ENCODE measurements at regions of chr17 and their contacts with region 1.

Region 1: GRCh38 chr17:8649157-8650118 is 18.9 kb upstream of the MYH10 start:
- DNase-seq: no peak
- ATAC-seq: peak; percentile 41; the same call in 2 of the 3 replicates
- H3K4me3 ChIP-seq: no peak overlapping the region
- H3K27ac ChIP-seq: no peak overlapping the region
- H3K4me1 ChIP-seq: peaks cover 61% of the 10 kb centered on the region
- H3K27me3 ChIP-seq: no peaks in the 10 kb centered on the region
- CTCF ChIP-seq: no peak
- EP300 ChIP-seq: no peak
- POLR2A ChIP-seq: no peak
- RAD21 ChIP-seq: no peak

Region 2: DNA sequence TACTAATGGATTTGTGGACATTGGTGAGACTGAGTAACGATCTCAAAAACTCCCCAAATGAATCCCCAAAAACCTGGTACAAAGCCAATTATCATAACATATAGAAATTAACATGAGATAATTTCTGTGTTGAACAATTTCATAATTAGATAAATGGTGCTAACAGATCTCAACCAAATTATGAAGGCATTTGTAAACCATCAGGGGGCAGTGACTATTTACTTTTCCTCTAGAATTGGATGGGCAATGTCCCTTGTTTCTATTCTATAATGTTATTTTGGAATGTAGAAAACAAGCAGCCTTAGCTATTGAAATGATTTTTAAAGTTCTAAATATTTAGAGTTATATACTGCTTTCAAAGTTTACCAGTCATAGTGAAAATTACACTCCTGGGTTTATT is 76.7 kb before region 1 on chr17:
- CTCF ChIA-PET with region 1: no interaction called
- POLR2A ChIA-PET with region 1: no interaction called
- in situ Hi-C with region 1: no loop called
- intact Hi-C with region 1: loop called (anchors 10 kb)
- DNase-seq: no peak
- ATAC-seq: no peak
- H3K4me3 ChIP-seq: no peak overlapping the region
- H3K27ac ChIP-seq: no peak overlapping the region
- H3K4me1 ChIP-seq: no peaks in the 10 kb centered on the region
- H3K27me3 ChIP-seq: no peaks in the 10 kb centered on the region
- CTCF ChIP-seq: no peak; the same call in 1 of the 2 replicates
- EP300 ChIP-seq: no peak
- POLR2A ChIP-seq: no peak
- RAD21 ChIP-seq: no peak

Region 3: DNA sequence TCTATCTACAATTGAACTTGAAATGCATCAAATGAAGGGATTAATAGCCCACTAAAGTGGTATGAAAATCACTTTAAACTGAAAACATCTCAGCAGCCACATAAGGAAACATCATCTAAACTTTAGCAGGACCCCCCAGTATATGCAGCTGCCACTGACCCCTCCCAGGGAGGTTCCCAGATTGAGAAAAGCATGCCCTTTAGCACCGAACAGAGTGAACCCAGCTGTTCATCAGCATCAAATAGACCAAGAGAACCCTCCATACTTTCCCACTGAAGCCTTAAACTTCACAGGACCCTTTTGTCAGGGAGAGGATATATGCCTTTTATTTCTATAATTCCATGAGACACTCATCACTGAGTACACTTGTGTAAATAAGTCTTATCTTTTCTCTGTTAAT is 63.5 kb before region 1 on chr17:
- CTCF ChIA-PET with region 1: no interaction called
- POLR2A ChIA-PET with region 1: no interaction called
- in situ Hi-C with region 1: no loop called
- intact Hi-C with region 1: no loop called
- DNase-seq: no peak
- ATAC-seq: no peak
- H3K4me3 ChIP-seq: no peak overlapping the region
- H3K27ac ChIP-seq: no peak overlapping the region
- H3K4me1 ChIP-seq: peaks cover 7% of the 10 kb centered on the region; the same call in 1 of the 2 replicates
- H3K27me3 ChIP-seq: no peaks in the 10 kb centered on the region
- CTCF ChIP-seq: no peak
- EP300 ChIP-seq: no peak
- POLR2A ChIP-seq: no peak
- RAD21 ChIP-seq: no peak

Region 4: DNA sequence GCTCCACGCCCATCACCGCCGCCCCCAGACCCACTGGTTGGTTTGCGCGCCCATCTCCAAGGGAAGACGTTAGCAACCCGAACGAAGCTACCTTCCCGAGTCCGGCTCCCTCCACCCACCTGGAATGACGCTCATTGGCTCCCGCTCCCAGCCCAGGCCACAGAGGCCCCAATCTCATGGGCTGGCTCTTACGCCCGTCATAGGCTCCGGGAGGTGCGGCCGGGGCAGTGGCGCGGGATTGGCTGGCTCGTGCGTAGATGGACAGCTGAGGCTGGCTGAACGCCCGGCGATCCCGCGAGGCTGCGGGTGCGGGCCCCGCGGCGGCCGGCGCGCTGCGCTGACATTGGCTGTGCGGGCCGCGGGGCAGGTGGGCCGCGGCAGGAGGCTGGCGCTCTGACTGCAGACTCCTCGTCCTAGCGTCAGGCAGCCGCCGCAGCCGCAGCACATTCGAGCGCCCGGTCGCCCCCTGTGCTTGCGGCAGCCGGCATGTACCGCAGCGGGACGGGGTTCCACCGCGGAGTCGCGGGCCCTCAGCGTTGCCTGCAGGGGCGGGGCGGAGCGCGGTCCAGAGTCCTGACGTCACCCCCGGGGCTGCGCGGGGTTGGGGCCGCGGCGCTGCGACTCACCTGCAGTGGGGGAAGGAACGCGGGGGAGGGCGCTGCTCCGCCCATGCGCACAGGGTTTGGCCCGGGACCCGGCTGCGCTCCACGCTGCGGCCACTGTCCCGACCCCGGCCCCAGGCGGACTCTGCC is 18.5 kb before region 1 on chr17:
- CTCF ChIA-PET with region 1: no interaction called
- POLR2A ChIA-PET with region 1: interaction called, 17 read pairs
- in situ Hi-C with region 1: no loop called
- intact Hi-C with region 1: no loop called
- DNase-seq: peak; percentile 99
- ATAC-seq: peak; percentile 95
- H3K4me3 ChIP-seq: peak overlapping the region; percentile 71 to 99 (median 99)
- H3K27ac ChIP-seq: peak overlapping the region; percentile 89
- H3K4me1 ChIP-seq: peaks cover 51% of the 10 kb centered on the region
- H3K27me3 ChIP-seq: no peaks in the 10 kb centered on the region
- CTCF ChIP-seq: peak; percentile 72
- EP300 ChIP-seq: no peak; a peak in 1 of 4 replicates
- POLR2A ChIP-seq: peak; percentile 65 to 71
- RAD21 ChIP-seq: peak; percentile 70